Body of pancreas (tissue), 4 donors: ENCODE measurements at regions of chr9 and their contacts with region 1.

Region 1: DNA sequence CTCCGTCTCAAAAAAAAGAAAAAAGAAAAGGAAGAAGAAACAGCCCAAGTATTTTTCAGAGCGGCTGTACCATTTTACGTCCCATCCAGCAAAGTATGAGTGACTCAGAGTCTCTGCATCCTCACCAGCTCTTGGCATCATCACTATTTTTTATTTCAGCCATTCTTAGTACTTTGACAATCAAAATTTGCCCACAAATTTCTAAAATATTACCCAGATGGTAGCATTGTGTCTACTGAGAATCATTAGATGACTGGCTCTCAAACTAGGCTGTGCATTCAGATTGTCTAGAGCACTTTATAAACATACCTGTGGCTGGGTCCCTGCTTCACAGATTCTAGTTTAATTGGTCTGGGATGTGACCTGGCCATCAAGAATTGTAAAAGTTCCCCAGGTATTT is 21.6 kb upstream of the MELK start:
- DNase-seq: no peak
- ATAC-seq: no peak
- H3K4me3 ChIP-seq: no peak overlapping the region
- H3K27ac ChIP-seq: no peak overlapping the region
- H3K4me1 ChIP-seq: no peaks in the 10 kb centered on the region
- H3K27me3 ChIP-seq: no peaks in the 10 kb centered on the region
- CTCF ChIP-seq: no peak
- POLR2A ChIP-seq: no peak

Region 2: GRCh38 chr9:36499174-36499890 is 51.8 kb before region 1 on chr9:
- intact Hi-C with region 1: loop called (anchors 10 kb)
- DNase-seq: no peak
- ATAC-seq: no peak
- H3K4me3 ChIP-seq: no peak overlapping the region
- H3K27ac ChIP-seq: no peak overlapping the region
- H3K4me1 ChIP-seq: no peaks in the 10 kb centered on the region
- H3K27me3 ChIP-seq: no peaks in the 10 kb centered on the region
- CTCF ChIP-seq: no peak
- POLR2A ChIP-seq: no peak

Region 3: GRCh38 chr9:36592801-36593583 is 41.9 kb after region 1 on chr9:
- intact Hi-C with region 1: no loop called
- DNase-seq: no peak
- ATAC-seq: no peak
- H3K4me3 ChIP-seq: no peak overlapping the region
- H3K27ac ChIP-seq: no peak overlapping the region
- H3K4me1 ChIP-seq: no peaks in the 10 kb centered on the region
- H3K27me3 ChIP-seq: no peaks in the 10 kb centered on the region
- CTCF ChIP-seq: no peak
- POLR2A ChIP-seq: no peak